A549 (cell line): ENCODE measurements at regions of chr2 and their contacts with region 1.

Region 1: DNA sequence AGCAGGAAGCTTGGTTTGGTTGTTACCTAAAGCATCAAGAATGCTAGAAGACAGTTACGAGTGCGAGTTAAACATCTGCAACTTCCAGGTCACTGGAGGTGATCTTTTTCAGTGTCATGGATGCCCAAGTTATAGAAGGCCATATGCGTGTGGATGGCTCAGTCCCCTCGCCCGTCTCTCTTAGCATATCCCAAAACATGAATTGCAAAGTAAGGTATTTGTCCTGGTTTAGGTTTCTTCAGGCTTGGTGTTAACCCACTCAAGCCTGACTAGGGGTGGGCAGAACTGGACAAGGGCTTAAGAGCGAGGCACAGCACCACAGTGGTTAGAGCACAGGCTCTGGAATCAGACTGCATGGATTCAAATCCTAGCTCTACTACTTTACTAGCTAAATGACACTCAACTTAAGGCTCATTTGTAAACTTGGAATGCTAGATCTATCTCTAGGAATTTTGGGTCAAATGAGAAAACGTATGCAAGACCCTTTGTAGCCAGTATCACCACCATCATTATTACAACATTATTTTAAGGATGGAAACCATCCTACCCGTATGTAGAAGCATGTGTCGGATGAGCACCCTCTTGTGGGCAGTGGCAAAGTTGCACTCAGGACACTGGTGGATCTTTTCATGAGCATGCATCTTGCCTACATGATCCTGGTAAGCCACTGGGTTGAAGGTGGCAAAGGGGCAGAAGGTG is 11.2 kb downstream of the ZNF142 start:
- DNase-seq: peak; percentile 71 to 80
- ATAC-seq: peak; percentile 89 to 91
- H3K4me3 ChIP-seq: no peak overlapping the region
- H3K27ac ChIP-seq: no peak overlapping the region
- H3K4me1 ChIP-seq: peaks cover 14% of the 10 kb centered on the region; the same call in 1 of the 3 replicates
- CTCF ChIP-seq: peak; percentile 82
- EP300 ChIP-seq: no peak
- POLR2A ChIP-seq: no peak
- RAD21 ChIP-seq: peak; percentile 68 to 73

Region 2: DNA sequence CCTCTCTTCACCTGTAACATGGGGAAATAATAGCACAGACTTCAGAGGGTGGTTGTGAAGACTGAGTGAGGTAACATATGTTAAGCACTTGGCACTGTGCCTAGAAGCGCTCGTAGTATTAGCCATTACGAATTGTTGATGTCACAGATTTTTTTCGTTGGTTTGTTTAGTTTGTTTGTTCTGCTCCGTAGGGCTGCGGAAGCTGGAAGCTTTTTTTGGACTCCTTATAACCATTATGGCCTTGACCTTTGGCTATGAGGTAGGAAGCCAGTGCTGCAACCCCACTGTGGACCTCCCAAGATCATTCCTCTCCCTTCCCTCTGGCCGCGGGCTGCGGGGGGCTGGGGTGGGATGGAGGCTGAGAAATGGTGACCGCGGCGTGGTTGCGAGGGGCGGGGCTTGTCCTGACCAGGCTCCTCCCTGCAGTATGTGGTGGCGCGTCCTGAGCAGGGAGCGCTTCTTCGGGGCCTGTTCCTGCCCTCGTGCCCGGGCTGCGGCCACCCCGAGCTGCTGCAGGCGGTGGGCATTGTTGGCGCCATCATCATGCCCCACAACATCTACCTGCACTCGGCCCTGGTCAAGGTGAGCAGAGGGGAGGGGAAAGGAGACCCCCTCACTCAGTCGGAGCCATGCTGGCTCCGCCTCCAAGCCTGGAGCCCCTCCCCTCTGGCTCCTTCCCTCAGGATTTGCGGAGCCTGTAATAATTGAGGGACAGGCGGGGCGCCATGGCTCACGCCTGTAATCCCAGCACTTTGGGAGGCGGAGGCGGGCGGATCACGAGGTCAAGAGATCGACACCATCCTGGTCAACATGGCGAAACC is 260.7 kb before region 1 on chr2:
- CTCF ChIA-PET with region 1: no interaction called
- POLR2A ChIA-PET with region 1: no interaction called
- DNase-seq: peak; percentile 74 to 82
- ATAC-seq: peak; percentile 95 to 96
- H3K4me3 ChIP-seq: peak overlapping the region; percentile 48
- H3K27ac ChIP-seq: peak overlapping the region; percentile 80 to 89
- H3K4me1 ChIP-seq: peaks cover 17% of the 10 kb centered on the region
- CTCF ChIP-seq: no peak
- EP300 ChIP-seq: peak; percentile 24 to 71; a peak in 3 of 5 replicates
- POLR2A ChIP-seq: peak; percentile 51
- RAD21 ChIP-seq: no peak

Region 3: GRCh38 chr2:218577482-218578220 is 70.6 kb before region 1 on chr2:
- CTCF ChIA-PET with region 1: interaction called, 12 read pairs
- POLR2A ChIA-PET with region 1: no interaction called
- DNase-seq: no peak
- ATAC-seq: no peak; a peak in 1 of 6 replicates
- H3K4me3 ChIP-seq: no peak overlapping the region
- H3K27ac ChIP-seq: no peak overlapping the region
- H3K4me1 ChIP-seq: peaks cover 34% of the 10 kb centered on the region
- CTCF ChIP-seq: no peak
- EP300 ChIP-seq: no peak
- POLR2A ChIP-seq: no peak
- RAD21 ChIP-seq: no peak

Region 4: GRCh38 chr2:218607436-218608115 is 40.7 kb before region 1 on chr2 and contains the start of gene PLCD4:
- CTCF ChIA-PET with region 1: interaction called, 12 read pairs
- POLR2A ChIA-PET with region 1: no interaction called
- DNase-seq: peak in 1 of 2 experiments; percentile 52
- ATAC-seq: peak; percentile 84 to 86
- H3K4me3 ChIP-seq: peak within 1 kb of the TSS; percentile 14; the same call in 1 of the 3 replicates
- H3K27ac ChIP-seq: peak within 1 kb of the TSS; percentile 21 to 62; a peak in 4 of 6 replicates
- H3K4me1 ChIP-seq: peaks cover 26% of the 10 kb centered on the region
- CTCF ChIP-seq: no peak
- EP300 ChIP-seq: no peak
- POLR2A ChIP-seq: no peak
- RAD21 ChIP-seq: no peak
- polyA plus RNA-seq, gene PLCD4: 2.5 and 2.8 TPM in 2 replicates

Region 5: DNA sequence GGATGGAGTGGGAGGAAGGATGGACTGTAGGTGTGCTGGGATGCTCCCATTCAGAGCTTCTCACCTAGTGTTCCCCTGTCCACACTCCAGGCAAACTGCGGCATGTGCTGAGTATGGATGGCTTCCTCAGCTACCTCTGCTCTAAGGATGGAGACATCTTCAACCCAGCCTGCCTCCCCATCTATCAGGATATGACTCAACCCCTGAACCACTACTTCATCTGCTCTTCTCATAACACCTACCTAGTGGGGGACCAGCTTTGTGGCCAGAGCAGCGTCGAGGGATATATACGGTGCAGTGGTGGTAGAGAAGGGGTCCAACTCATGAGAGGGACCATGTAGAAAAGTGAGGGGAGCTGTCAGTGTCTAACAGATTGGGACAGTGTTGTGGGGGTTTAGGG is 20.3 kb before region 1 on chr2:
- CTCF ChIA-PET with region 1: interaction called, 11 read pairs
- POLR2A ChIA-PET with region 1: no interaction called
- DNase-seq: no peak
- ATAC-seq: peak; percentile 10 to 32; a peak in 1 of 6 replicates
- H3K4me3 ChIP-seq: no peak overlapping the region
- H3K27ac ChIP-seq: no peak overlapping the region
- H3K4me1 ChIP-seq: no peaks in the 10 kb centered on the region
- CTCF ChIP-seq: no peak
- EP300 ChIP-seq: no peak
- POLR2A ChIP-seq: no peak
- RAD21 ChIP-seq: no peak

Region 6: GRCh38 chr2:218659258-218659987 is 11.2 kb after region 1 on chr2 and contains the starts of genes BCS1L and ZNF142:
- CTCF ChIA-PET with region 1: interaction called, 76 read pairs
- POLR2A ChIA-PET with region 1: no interaction called
- DNase-seq: peak; percentile 90 to 92
- ATAC-seq: peak; percentile 94 to 96
- H3K4me3 ChIP-seq: peak within 1 kb of the TSS; percentile 77
- H3K27ac ChIP-seq: peak within 1 kb of the TSS; percentile 93 to 95
- H3K4me1 ChIP-seq: peaks cover 14% of the 10 kb centered on the region; the same call in 2 of the 3 replicates
- CTCF ChIP-seq: no peak
- EP300 ChIP-seq: no peak
- POLR2A ChIP-seq: peak; percentile 91
- RAD21 ChIP-seq: no peak
- polyA plus RNA-seq, gene BCS1L: 47.1 and 47.2 TPM in 2 replicates
- polyA plus RNA-seq, gene ZNF142: 6.3 and 9.5 TPM in 2 replicates

Region 7: GRCh38 chr2:218671654-218672566 is 23.7 kb after region 1 on chr2 and contains the starts of genes RNF25 and STK36:
- CTCF ChIA-PET with region 1: interaction called, 12 read pairs
- POLR2A ChIA-PET with region 1: no interaction called
- DNase-seq: peak; percentile 84 to 88
- ATAC-seq: peak; percentile 99
- H3K4me3 ChIP-seq: peak within 1 kb of the TSS; percentile 87
- H3K27ac ChIP-seq: peak within 1 kb of the TSS; percentile 84 to 90
- H3K4me1 ChIP-seq: peaks cover 11% of the 10 kb centered on the region; the same call in 2 of the 3 replicates
- CTCF ChIP-seq: no peak
- EP300 ChIP-seq: no peak
- POLR2A ChIP-seq: peak; percentile 88
- RAD21 ChIP-seq: no peak
- polyA plus RNA-seq, gene RNF25: 61.5 and 74.0 TPM in 2 replicates
- polyA plus RNA-seq, gene STK36: 29.9 and 40.8 TPM in 2 replicates

Region 8: GRCh38 chr2:218745559-218746469 is 97.6 kb after region 1 on chr2:
- CTCF ChIA-PET with region 1: no interaction called
- POLR2A ChIA-PET with region 1: no interaction called
- DNase-seq: no peak
- ATAC-seq: peak in 1 of 2 experiments; percentile 43; a peak in 3 of 6 replicates
- H3K4me3 ChIP-seq: no peak overlapping the region
- H3K27ac ChIP-seq: peak overlapping the region in 1 of 2 experiments; percentile 68; a peak in 3 of 6 replicates
- H3K4me1 ChIP-seq: peaks cover 5% of the 10 kb centered on the region; the same call in 1 of the 3 replicates
- CTCF ChIP-seq: no peak
- EP300 ChIP-seq: no peak
- POLR2A ChIP-seq: no peak
- RAD21 ChIP-seq: no peak